ENCODE measurements at regions of chr18 and their contacts with region 1.

Region 1: GRCh38 chr18:58993260-58993659 is 128.6 kb downstream of the ZNF532 start:
- DNase-seq: peak; percentile 92
- H3K4me3 ChIP-seq: no peak overlapping the region
- H3K27ac ChIP-seq: peak overlapping the region; percentile 91
- H3K4me1 ChIP-seq: peaks cover 50% of the 10 kb centered on the region
- H3K27me3 ChIP-seq: no peaks in the 10 kb centered on the region
- CTCF ChIP-seq: no peak
- POLR2A ChIP-seq: no peak

Region 2: GRCh38 chr18:58788971-58789875 is 204.0 kb before region 1 on chr18:
- CTCF ChIA-PET with region 1: no interaction called
- POLR2A ChIA-PET with region 1: no interaction called
- dilution Hi-C with region 1: no loop called
- intact Hi-C with region 1: loop called (anchors 1 kb)
- DNase-seq: peak; percentile 96
- H3K4me3 ChIP-seq: peak overlapping the region in 1 of 3 experiments; percentile 5
- H3K27ac ChIP-seq: peak overlapping the region; percentile 98
- H3K4me1 ChIP-seq: peaks cover 43% of the 10 kb centered on the region
- H3K27me3 ChIP-seq: no peaks in the 10 kb centered on the region
- CTCF ChIP-seq: no peak
- POLR2A ChIP-seq: peak; percentile 20

Region 3: DNA sequence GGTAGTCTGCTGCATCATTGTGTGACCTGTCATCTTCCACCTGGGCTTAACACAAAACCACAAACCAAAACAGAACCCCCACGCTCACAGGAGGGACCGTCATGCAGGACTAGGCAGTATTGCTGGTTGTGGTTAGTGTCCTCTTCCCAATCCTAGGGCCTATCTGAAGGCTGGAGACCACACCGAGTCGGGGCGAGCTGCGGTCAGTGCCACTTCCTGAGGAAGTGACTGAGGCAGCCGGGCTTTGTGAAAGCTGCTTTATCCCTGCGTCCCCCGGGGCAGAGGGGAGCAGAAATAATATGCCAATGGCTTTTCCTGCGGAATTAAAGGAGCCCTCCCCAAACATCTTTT is 105.7 kb before region 1 on chr18:
- CTCF ChIA-PET with region 1: no interaction called
- POLR2A ChIA-PET with region 1: no interaction called
- dilution Hi-C with region 1: no loop called
- intact Hi-C with region 1: loop called (anchors 1 kb)
- DNase-seq: peak; percentile 78
- H3K4me3 ChIP-seq: no peak overlapping the region
- H3K27ac ChIP-seq: peak overlapping the region; percentile 43
- H3K4me1 ChIP-seq: peaks cover 18% of the 10 kb centered on the region
- H3K27me3 ChIP-seq: no peaks in the 10 kb centered on the region
- CTCF ChIP-seq: no peak
- POLR2A ChIP-seq: peak; percentile 42

Region 4: GRCh38 chr18:58924473-58924872 is 68.8 kb before region 1 on chr18:
- CTCF ChIA-PET with region 1: no interaction called
- POLR2A ChIA-PET with region 1: no interaction called
- dilution Hi-C with region 1: no loop called
- intact Hi-C with region 1: no loop called
- DNase-seq: no peak
- H3K4me3 ChIP-seq: no peak overlapping the region
- H3K27ac ChIP-seq: no peak overlapping the region
- H3K4me1 ChIP-seq: no peaks in the 10 kb centered on the region
- H3K27me3 ChIP-seq: no peaks in the 10 kb centered on the region
- CTCF ChIP-seq: no peak
- POLR2A ChIP-seq: no peak

Region 5: DNA sequence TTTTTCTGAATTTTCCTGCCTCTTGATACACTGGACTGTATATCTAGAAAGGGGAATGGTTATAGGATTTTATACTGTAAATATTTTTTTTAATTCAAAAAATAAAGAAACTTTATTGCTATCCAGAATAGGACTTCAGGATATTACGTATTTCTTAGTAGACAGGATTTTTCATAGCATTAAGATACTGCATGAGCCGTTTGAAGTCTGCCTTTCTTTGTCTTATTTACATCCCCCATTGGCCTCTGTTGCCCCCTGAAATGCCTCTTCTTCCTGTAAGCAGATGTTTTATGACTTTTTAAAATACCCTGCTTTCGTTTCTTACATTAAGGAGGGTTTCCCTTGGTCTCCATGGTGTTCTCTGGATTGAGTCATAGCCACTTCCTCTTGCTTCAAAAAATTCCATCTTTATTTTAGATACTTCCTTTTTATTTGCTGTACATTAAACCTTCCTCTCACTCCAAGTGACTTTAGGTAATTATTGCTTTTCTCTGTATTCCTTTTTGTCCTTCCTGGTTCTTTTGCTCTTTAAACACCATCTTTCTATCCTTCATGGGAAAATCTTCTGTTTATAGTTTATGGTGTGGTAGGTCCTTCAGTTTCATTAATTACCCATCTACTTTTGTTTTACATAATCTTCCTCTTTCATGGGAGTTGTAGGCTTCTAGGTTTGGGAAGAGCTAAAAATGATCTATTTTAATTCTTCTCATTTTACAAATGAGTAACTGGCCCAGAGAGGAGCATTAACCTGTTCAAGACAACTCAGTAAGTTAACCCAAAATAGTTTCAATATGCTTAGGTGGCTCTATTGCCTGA is 56.0 kb before region 1 on chr18:
- CTCF ChIA-PET with region 1: no interaction called
- POLR2A ChIA-PET with region 1: no interaction called
- dilution Hi-C with region 1: no loop called
- intact Hi-C with region 1: loop called (anchors 1 kb)
- DNase-seq: peak; percentile 87
- H3K4me3 ChIP-seq: peak overlapping the region in 1 of 3 experiments; percentile 34
- H3K27ac ChIP-seq: peak overlapping the region; percentile 60
- H3K4me1 ChIP-seq: peaks cover 18% of the 10 kb centered on the region
- H3K27me3 ChIP-seq: no peaks in the 10 kb centered on the region
- CTCF ChIP-seq: no peak
- POLR2A ChIP-seq: no peak

Region 6: GRCh38 chr18:59012815-59013677 is 19.8 kb after region 1 on chr18:
- CTCF ChIA-PET with region 1: interaction called, 4 read pairs
- POLR2A ChIA-PET with region 1: no interaction called
- dilution Hi-C with region 1: no loop called
- intact Hi-C with region 1: loop called (anchors 2 kb)
- DNase-seq: peak; percentile 32
- H3K4me3 ChIP-seq: no peak overlapping the region
- H3K27ac ChIP-seq: no peak overlapping the region
- H3K4me1 ChIP-seq: peaks cover 8% of the 10 kb centered on the region
- H3K27me3 ChIP-seq: no peaks in the 10 kb centered on the region
- CTCF ChIP-seq: no peak
- POLR2A ChIP-seq: no peak

Region 7: DNA sequence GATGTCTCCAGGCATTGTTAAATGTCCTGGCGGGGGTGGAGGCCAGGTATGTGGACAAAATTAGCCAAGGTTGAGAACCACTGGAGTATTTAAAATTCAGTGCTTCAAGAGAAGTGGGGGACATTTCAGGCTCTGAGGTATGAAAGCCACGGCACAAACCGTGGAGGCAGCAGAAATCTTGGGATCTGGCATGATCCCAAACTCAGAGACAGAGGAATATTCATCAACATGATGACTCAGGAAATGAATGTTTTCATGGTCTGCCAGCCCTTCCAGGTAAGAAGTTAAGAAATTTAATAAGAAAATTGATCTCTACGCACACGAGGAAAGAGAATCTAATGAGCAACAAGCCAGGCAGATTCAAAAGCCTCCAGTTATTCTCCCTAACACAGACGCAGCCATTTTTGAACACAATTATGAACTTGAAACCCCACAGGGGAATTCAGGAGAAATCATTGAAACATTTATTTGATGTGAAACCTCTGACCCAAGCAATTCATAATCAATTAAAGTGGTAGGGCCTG is 215.4 kb after region 1 on chr18:
- CTCF ChIA-PET with region 1: no interaction called
- POLR2A ChIA-PET with region 1: no interaction called
- dilution Hi-C with region 1: no loop called
- intact Hi-C with region 1: no loop called
- DNase-seq: no peak
- H3K4me3 ChIP-seq: no peak overlapping the region
- H3K27ac ChIP-seq: no peak overlapping the region
- H3K4me1 ChIP-seq: no peaks in the 10 kb centered on the region
- H3K27me3 ChIP-seq: no peaks in the 10 kb centered on the region
- CTCF ChIP-seq: no peak
- POLR2A ChIP-seq: no peak

Measured in endothelial cell of umbilical vein (primary cell).